Activated naive CD4-positive, alpha-beta T cell treated with anti-CD3 and anti-CD28 coated beads for 36 hours (primary cell): ENCODE measurements at regions of chr20 and their contacts with region 1.

Region 1: DNA sequence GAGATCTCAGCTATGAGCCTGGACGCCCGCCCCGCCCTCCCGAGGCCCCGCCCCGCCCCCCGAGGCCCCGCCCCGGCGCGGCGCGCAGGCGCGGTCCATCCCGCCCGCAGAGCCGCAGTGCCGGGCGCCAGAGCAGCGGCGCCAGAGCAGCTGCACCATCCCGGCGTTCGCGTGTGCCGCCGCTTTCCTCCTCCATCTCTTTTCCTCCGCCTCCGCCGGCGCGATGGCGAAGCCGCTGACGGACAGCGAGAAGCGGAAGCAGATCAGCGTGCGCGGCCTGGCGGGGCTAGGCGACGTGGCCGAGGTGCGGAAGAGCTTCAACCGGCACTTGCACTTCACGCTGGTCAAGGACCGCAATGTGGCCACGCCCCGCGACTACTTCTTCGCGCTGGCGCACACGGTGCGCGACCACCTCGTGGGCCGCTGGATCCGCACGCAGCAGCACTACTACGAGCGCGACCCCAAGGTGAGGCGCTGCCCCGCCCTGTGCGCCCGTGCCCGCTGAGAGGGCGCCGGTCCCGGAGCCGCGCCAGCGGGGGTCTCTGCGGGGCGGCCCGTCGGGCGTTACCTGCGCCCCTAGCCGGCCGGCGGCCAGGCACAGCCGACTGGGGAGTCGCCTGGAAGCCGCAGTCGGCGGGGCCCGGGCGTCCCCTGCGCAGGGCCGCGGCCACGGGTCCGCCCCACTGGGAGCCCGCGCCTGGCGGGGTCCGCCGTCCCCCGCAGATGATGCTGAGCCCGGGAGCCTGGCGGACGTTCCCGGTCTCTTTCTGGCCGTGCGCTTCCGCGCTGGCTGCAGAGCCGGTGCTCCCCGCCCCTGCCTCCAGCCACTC is at the start of gene PYGB:
- DNase-seq: peak; percentile 68
- H3K4me3 Mint-ChIP-seq: peak within 1 kb of the TSS; percentile 91
- H3K27ac Mint-ChIP-seq: peak within 1 kb of the TSS; percentile 82
- H3K4me1 Mint-ChIP-seq: peaks cover 57% of the 10 kb centered on the region
- H3K27me3 Mint-ChIP-seq: peaks cover 7% of the 10 kb centered on the region
- total RNA-seq, gene PYGB: 19.6 to 20.0 TPM

Region 2: GRCh38 chr20:25294459-25295385 is 46.6 kb after region 1 on chr20:
- CTCF ChIA-PET with region 1: interaction called, 5 read pairs
- intact Hi-C with region 1: loop called (anchors 5 kb)
- DNase-seq: peak; percentile 70
- H3K4me3 Mint-ChIP-seq: no peak overlapping the region
- H3K27ac Mint-ChIP-seq: peak overlapping the region; percentile 11
- H3K4me1 Mint-ChIP-seq: no peaks in the 10 kb centered on the region
- H3K27me3 Mint-ChIP-seq: no peaks in the 10 kb centered on the region